IMR-90 (cell line): ENCODE measurements at regions of chr2 and their contacts with region 1.

Region 1: GRCh38 chr2:118003396-118003824 is 10.5 kb downstream of the CCDC93 start:
- DNase-seq: peak; percentile 85
- ATAC-seq: peak; percentile 96
- H3K4me3 ChIP-seq: no peak overlapping the region
- H3K27ac ChIP-seq: no peak overlapping the region
- H3K4me1 ChIP-seq: no peaks in the 10 kb centered on the region
- H3K27me3 ChIP-seq: no peaks in the 10 kb centered on the region
- CTCF ChIP-seq: peak; percentile 96
- POLR2A ChIP-seq: no peak
- RAD21 ChIP-seq: peak; percentile 96

Region 2: DNA sequence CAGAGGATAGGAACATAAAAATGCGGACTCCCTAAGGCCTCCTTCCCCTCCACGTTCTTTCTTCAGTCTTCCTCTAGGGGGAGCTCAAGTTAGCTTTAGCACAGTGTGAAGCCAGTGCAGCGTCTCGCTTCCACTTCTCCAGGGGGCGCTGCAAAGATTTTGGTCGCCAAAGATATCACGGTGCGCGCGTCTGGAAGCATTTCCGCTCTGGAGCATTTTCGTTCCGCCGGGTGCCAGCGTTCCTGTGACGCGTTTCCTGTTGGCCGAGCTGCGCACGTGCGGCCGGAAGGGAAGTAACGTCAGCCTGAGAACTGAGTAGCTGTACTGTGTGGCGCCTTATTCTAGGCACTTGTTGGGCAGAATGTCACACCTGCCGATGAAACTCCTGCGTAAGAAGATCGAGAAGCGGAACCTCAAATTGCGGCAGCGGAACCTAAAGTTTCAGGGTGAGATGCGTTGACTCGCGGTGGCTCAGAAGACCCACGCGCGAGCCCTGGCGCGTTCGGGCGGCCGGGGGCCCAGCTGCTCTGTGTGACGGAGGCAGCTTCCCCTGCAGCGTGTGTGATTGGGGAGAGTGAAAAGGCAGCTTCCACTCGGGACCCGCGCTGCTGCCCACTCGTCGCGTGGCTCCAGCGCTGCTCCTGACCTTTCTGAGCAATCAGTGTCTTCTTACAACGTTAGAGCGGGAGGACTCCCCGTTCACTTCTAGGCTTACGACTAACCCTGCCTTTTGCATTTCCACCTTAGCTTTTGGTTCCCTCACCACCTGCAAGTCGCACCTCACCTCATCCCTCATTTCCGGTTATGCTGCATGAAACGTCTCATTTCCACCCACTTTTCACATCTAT is 188.8 kb before region 1 on chr2 and contains the start of gene DDX18:
- CTCF ChIA-PET with region 1: interaction called, 23 read pairs
- POLR2A ChIA-PET with region 1: no interaction called
- dilution Hi-C with region 1: no loop called
- in situ Hi-C with region 1: no loop called
- intact Hi-C with region 1: loop called (anchors 1 kb)
- DNase-seq: peak; percentile 97
- ATAC-seq: peak; percentile 99
- H3K4me3 ChIP-seq: peak within 1 kb of the TSS; percentile 71
- H3K27ac ChIP-seq: peak within 1 kb of the TSS; percentile 77
- H3K4me1 ChIP-seq: peaks cover 1% of the 10 kb centered on the region; the same call in 1 of the 2 replicates
- H3K27me3 ChIP-seq: no peaks in the 10 kb centered on the region
- CTCF ChIP-seq: peak; percentile 100; the same call in 1 of the 2 replicates
- POLR2A ChIP-seq: peak; percentile 91
- RAD21 ChIP-seq: peak; percentile 66
- total RNA-seq, gene DDX18: 68.3 and 69.9 TPM in 2 replicates

Region 3: DNA sequence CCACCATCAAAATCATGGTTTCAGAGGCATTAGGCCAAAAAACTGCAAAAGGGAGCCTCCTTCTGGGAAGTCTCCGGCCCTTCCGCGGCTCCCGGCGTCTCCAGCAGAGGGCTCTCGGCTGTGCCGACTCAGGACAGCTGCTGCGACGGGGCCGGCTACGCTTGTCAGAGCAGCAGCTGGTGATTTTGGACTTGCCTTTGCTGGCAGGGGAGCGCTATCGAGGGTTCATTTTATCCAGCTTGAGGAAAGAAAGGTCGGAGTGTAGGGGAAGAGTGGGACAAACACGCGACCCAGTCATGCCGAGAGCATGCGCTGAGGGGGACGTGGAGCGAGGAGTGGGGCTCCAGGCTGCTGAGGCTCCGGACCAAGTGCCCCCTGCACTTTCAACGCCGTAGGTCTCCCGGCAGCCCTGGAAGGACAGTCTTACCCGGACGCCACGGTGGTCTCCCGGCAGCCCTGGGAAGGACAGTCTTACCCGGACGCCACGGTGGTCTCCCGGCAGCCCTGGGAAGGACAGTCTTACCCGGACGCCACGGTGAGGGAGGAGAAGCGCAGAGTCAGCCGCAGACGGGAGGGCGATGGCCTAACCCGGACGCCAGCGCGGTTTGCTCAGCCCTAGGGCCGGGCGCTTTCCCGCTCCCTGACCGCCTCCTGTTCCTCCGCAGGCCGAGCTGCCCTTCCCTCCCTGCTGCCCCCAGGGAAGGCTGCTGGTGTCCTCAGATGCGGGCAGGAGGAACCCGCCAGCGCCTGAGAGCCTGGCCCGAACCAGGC is 167.2 kb before region 1 on chr2:
- CTCF ChIA-PET with region 1: interaction called, 22 read pairs
- POLR2A ChIA-PET with region 1: no interaction called
- dilution Hi-C with region 1: no loop called
- in situ Hi-C with region 1: loop called (anchors 5 kb)
- intact Hi-C with region 1: loop called (anchors 1 kb)
- DNase-seq: peak; percentile 76
- ATAC-seq: peak; percentile 95
- H3K4me3 ChIP-seq: peak overlapping the region; percentile 39; the same call in 1 of the 2 replicates
- H3K27ac ChIP-seq: no peak overlapping the region
- H3K4me1 ChIP-seq: no peaks in the 10 kb centered on the region
- H3K27me3 ChIP-seq: no peaks in the 10 kb centered on the region
- CTCF ChIP-seq: peak; percentile 88
- POLR2A ChIP-seq: no peak
- RAD21 ChIP-seq: peak; percentile 85

Region 4: GRCh38 chr2:117943013-117943672 is 60.3 kb before region 1 on chr2:
- CTCF ChIA-PET with region 1: interaction called, 10 read pairs
- POLR2A ChIA-PET with region 1: no interaction called
- dilution Hi-C with region 1: no loop called
- in situ Hi-C with region 1: loop called (anchors 5 kb)
- intact Hi-C with region 1: loop called (anchors 5 kb)
- DNase-seq: peak; percentile 79
- ATAC-seq: peak; percentile 88
- H3K4me3 ChIP-seq: no peak overlapping the region
- H3K27ac ChIP-seq: 0 out of 2 replicates have a peak overlapping the region, but pooled peaks have one; percentile 10
- H3K4me1 ChIP-seq: peaks cover 8% of the 10 kb centered on the region
- H3K27me3 ChIP-seq: no peaks in the 10 kb centered on the region
- CTCF ChIP-seq: no peak
- POLR2A ChIP-seq: no peak
- RAD21 ChIP-seq: no peak

Region 5: GRCh38 chr2:117958186-117958585 is 45.2 kb before region 1 on chr2:
- CTCF ChIA-PET with region 1: interaction called, 4 read pairs
- POLR2A ChIA-PET with region 1: no interaction called
- dilution Hi-C with region 1: no loop called
- in situ Hi-C with region 1: no loop called
- intact Hi-C with region 1: loop called (anchors 5 kb)
- DNase-seq: peak; percentile 69
- ATAC-seq: peak; percentile 78
- H3K4me3 ChIP-seq: no peak overlapping the region
- H3K27ac ChIP-seq: peak overlapping the region; percentile 77; the same call in 1 of the 2 replicates
- H3K4me1 ChIP-seq: peaks cover 5% of the 10 kb centered on the region
- H3K27me3 ChIP-seq: no peaks in the 10 kb centered on the region
- CTCF ChIP-seq: no peak
- POLR2A ChIP-seq: no peak
- RAD21 ChIP-seq: no peak

Region 6: DNA sequence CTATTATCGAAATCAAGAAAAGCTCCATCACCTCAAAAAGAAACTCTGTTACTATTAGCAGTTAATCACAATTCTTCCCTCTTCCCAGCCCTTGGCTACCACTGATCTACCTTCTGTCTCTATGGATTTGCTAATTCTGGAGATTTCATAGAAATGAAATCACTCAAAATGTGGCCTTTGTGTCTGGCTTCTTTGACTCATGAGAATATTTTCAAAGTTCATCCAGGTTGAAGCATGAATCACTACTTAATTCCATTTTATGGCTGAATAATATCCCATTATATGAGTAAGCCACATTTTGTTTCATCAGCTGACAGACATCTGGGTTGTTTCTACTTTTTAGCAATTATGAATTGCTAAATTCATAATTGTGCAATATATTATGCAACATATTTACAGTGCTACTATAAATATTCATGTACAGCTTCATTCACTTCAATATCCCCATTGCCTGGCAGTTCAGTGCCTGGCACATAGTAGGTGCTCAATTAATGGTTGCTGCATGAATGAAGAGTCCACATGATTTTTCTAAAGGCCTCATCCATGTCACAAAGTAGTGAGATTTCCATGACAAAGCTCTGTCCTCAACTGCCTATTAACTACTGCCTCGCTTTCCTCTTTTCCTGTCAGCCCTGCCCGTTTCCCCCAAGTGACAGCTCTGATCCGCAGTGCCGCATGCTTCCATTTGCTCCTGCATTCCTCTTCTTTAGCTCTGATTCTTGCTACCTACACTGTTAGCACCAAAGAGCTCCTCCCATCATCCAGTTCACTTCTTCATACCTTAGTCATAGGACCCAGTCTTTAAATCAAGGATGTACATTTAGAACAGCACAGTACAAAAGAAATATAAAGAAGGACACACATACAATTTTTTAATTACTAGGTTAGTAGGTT is 22.4 kb before region 1 on chr2:
- CTCF ChIA-PET with region 1: interaction called, 11 read pairs
- POLR2A ChIA-PET with region 1: no interaction called
- dilution Hi-C with region 1: no loop called
- in situ Hi-C with region 1: no loop called
- intact Hi-C with region 1: no loop called
- DNase-seq: peak; percentile 92
- ATAC-seq: peak; percentile 69
- H3K4me3 ChIP-seq: no peak overlapping the region
- H3K27ac ChIP-seq: peak overlapping the region; percentile 73; the same call in 1 of the 2 replicates
- H3K4me1 ChIP-seq: peaks cover 12% of the 10 kb centered on the region
- H3K27me3 ChIP-seq: no peaks in the 10 kb centered on the region
- CTCF ChIP-seq: no peak
- POLR2A ChIP-seq: no peak
- RAD21 ChIP-seq: no peak

Region 7: DNA sequence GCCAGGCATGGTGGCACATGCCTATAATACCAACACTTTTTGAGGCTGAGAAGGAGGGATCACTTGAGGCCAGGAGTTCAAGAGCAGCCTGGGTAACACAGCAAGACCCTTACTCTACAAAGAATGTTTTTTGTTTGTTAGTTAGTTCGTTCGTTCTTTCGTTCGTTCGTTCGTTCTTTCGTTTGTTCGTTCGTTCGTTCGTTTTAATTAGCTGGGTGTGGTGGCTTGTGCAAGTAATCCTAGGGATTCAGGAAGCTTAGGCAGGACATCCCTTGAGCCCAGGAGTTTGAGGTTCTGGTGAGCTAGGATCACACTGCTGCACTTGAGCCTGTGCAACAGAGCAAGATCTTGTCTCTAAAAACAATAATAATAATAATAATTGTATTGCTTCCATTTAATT is 1037.3 kb after region 1 on chr2:
- CTCF ChIA-PET with region 1: no interaction called
- POLR2A ChIA-PET with region 1: no interaction called
- dilution Hi-C with region 1: no loop called
- in situ Hi-C with region 1: no loop called
- intact Hi-C with region 1: no loop called
- DNase-seq: no peak
- ATAC-seq: no peak
- H3K4me3 ChIP-seq: no peak overlapping the region
- H3K27ac ChIP-seq: no peak overlapping the region
- H3K4me1 ChIP-seq: no peaks in the 10 kb centered on the region
- H3K27me3 ChIP-seq: no peaks in the 10 kb centered on the region
- CTCF ChIP-seq: no peak
- POLR2A ChIP-seq: no peak
- RAD21 ChIP-seq: no peak